Activated CD4-positive, alpha-beta T cell treated with anti-CD3 and anti-CD28 coated beads for 36 hours (primary cell): ENCODE measurements at regions of chr11 and their contacts with region 1.

Region 1: DNA sequence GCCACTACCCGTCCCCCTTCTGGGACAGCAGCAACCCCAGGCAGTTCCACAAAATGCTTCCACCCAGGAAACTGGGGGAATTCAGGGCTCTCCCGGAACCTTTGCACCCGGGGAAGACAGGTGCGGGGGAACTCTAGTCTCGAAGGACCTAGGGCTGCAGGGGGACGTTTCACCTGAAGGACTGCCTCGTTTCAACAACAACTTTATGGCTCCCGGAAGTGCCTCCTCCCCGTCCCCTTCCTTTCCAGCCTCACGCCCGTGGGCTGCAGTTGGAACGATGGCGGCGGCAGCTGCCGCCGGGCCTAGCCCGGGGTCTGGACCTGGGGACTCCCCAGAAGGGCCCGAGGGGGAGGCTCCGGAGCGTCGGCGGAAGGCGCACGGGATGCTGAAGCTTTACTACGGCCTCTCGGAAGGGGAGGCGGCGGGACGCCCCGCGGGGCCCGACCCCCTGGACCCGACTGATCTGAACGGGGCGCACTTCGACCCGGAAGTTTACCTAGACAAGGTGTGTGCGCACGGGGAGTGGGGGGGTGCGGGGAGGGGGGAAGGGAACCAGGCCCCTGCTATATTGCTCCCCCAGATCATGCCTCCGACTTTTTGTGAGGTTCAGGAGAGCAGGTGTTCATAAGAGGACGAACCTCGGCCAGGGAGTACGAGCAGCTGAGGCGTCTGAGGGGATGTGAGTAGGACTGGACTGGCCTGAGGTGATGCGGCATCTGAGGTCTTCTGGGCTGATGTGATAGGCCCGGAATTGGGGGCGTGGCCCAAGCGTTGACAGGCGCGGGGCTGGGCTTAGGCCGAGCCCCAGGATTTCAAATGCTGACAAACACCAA is at the start of gene VPS51:
- DNase-seq: peak; percentile 93
- ATAC-seq: peak; percentile 98
- H3K4me3 Mint-ChIP-seq: peak within 1 kb of the TSS; percentile 92
- H3K27ac Mint-ChIP-seq: peak within 1 kb of the TSS; percentile 94
- H3K4me1 Mint-ChIP-seq: peaks cover 12% of the 10 kb centered on the region
- H3K27me3 Mint-ChIP-seq: no peaks in the 10 kb centered on the region
- total RNA-seq, gene VPS51: 94.3 to 123 TPM

Region 2: GRCh38 chr11:64810271-64810890 is 285.8 kb before region 1 on chr11 and contains the start of gene MEN1:
- CTCF ChIA-PET with region 1: no interaction called
- POLR2A ChIA-PET with region 1: no interaction called
- intact Hi-C with region 1: loop called in 1 of 2 experiments (anchors 1 kb)
- DNase-seq: peak; percentile 92
- ATAC-seq: peak; percentile 95
- H3K4me3 Mint-ChIP-seq: peak within 1 kb of the TSS; percentile 93
- H3K27ac Mint-ChIP-seq: peak within 1 kb of the TSS; percentile 85
- H3K4me1 Mint-ChIP-seq: peaks cover 21% of the 10 kb centered on the region
- H3K27me3 Mint-ChIP-seq: no peaks in the 10 kb centered on the region
- total RNA-seq, gene MEN1: 34.8 to 38.5 TPM

Region 3: GRCh38 chr11:65027213-65028067 is 68.8 kb before region 1 on chr11 and contains the start of gene SNX15:
- CTCF ChIA-PET with region 1: interaction called, 3 read pairs
- POLR2A ChIA-PET with region 1: no interaction called
- intact Hi-C with region 1: loop called in 1 of 2 experiments (anchors 1 kb)
- DNase-seq: peak; percentile 94
- ATAC-seq: peak; percentile 91
- H3K4me3 Mint-ChIP-seq: peak within 1 kb of the TSS; percentile 73
- H3K27ac Mint-ChIP-seq: peak within 1 kb of the TSS; percentile 86
- H3K4me1 Mint-ChIP-seq: peaks cover 21% of the 10 kb centered on the region
- H3K27me3 Mint-ChIP-seq: no peaks in the 10 kb centered on the region
- total RNA-seq, gene SNX15: 12.1 to 14.2 TPM

Region 4: DNA sequence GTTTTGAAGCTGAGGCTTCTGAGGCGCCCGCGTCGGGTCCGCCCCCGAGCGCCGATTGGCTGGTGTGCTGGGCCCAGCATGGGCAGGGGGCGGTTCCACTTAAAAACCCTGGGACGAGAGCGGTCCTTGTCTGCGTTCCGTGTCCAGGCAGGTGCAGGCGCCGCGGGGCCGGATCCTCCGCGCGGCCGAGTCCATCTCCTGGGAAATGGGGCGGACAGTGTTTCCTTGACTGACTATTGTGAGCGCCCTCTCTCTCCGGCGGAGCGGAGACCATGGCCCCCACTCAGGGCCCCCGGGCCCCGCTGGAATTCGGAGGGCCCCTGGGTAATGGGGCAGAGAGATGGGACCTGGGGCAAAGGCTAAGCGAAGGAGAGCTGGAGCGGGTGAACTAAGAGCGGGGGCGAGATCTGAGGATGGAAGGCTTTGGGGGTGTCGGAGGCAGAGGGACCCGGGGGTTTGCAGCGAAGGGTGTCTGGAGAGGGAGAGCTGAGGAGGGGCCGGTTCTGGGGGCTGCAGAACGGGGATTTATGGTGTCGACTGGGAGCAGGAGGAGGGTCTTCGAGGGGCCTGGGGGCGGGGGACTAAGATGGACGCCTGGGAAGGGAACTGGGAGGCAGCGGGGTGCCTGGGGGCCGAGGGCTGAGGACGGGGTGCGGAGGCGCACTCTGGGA is 15.7 kb after region 1 on chr11 and contains the start of gene TM7SF2:
- CTCF ChIA-PET with region 1: interaction called, 56 read pairs
- POLR2A ChIA-PET with region 1: interaction called, 7 read pairs
- intact Hi-C with region 1: loop called (anchors 1 kb)
- DNase-seq: peak; percentile 98
- ATAC-seq: peak; percentile 78
- H3K4me3 Mint-ChIP-seq: peak within 1 kb of the TSS; percentile 83
- H3K27ac Mint-ChIP-seq: peak within 1 kb of the TSS; percentile 74
- H3K4me1 Mint-ChIP-seq: peaks cover 50% of the 10 kb centered on the region
- H3K27me3 Mint-ChIP-seq: no peaks in the 10 kb centered on the region
- total RNA-seq, gene TM7SF2: 17.4 to 18.1 TPM

Region 5: DNA sequence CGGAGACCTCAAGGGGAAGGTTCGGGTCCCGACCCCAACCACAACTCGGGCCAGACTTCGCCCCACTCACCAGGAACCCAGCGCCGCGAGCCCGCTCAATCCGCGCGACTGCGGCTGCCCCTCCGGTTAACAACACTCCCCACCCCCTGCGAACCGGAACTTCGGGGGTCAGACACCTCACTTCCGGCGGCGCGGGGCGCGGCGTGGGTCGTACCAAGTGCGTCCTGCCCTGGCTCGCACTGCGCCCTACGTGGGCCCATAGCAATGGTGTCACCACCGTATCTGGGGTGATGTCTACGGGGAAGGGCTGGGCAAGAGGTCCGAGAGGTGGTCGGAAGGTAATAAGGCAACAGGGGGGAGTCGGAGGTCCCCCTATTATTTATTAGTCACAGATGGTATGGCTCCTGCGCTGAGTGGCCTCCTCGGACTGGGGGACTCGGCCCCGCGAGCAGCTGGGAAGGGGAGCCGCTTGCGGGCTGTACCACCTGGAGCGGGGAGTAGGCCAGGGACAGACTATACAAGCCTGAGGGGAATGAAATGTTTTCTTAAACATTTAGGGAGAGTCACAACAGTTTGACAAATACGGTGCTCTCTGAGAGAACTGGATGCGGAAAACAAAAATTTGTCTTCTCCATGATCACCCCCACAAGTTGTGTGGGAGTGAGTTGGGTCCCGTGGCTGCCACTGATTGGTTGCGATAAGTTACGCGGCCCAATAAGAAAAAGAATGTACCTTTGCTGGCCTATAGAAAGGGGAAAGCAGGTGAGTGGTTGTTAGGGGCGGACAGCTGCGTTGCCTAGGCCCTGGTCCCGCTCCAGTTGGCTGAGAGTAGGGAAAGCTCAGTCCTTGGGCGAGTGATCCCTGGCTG is 38.4 kb after region 1 on chr11 and contains the start of gene SYVN1:
- CTCF ChIA-PET with region 1: interaction called, 4 read pairs
- POLR2A ChIA-PET with region 1: interaction called, 4 read pairs
- intact Hi-C with region 1: loop called (anchors 1 kb)
- DNase-seq: peak; percentile 95
- ATAC-seq: peak; percentile 91
- H3K4me3 Mint-ChIP-seq: peak within 1 kb of the TSS; percentile 97
- H3K27ac Mint-ChIP-seq: peak within 1 kb of the TSS; percentile 97
- H3K4me1 Mint-ChIP-seq: peaks cover 27% of the 10 kb centered on the region
- H3K27me3 Mint-ChIP-seq: no peaks in the 10 kb centered on the region
- total RNA-seq, gene SYVN1: 24.3 to 31.1 TPM